Activated CD4-positive, alpha-beta memory T cell treated with anti-CD3 and anti-CD28 coated beads, Interleukin-2, amount 10 ng/mL, durations not matched to agents 7 days and 5 days (primary cell): ENCODE measurements at regions of chr11 and their contacts with region 1.

Region 1: DNA sequence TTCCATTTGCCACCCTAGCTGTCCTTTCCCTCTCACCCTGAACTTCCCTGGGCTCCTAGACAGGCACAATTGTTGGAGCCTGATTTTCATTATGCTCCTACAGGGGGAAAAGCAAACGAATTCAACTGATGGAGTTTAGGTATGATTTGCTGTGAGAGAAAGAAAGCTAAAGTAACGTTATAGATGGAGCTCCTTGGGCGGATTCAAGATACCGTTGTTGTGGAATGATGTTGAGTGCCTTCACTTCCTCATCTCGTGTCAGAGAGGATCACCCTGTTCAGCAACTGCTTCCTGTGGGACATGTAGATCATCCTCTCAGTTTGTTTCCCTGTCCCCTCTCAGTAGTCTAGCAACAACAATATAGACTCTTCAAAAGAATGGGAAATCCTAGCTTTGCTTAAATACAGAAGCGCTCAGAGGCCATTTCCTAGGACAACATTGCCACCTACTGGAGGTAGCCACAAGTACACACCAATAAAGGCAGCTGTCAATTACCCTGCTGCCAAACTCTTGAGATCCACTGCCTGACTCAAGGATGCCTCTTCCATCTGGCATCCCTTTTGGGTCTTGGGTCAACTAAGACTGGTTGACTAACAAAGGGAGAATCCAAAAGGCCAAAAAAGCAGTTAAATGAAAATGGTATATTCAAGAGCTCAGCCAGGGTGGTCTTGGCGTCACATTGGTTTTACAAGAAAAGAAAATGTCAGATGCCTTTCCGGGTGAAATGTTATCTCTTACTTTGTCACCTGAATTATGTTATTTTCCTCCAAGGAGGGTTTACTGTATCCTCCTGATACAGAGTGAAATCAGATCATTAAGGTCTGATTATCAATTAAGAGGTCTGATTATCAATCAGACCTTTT is 13.5 kb upstream of the DTX4 start:
- DNase-seq: peak; percentile 69
- H3K4me3 Mint-ChIP-seq: no peak overlapping the region
- H3K27ac Mint-ChIP-seq: no peak overlapping the region
- H3K4me1 Mint-ChIP-seq: peaks cover 10% of the 10 kb centered on the region
- H3K27me3 Mint-ChIP-seq: peaks cover 7% of the 10 kb centered on the region

Region 2: DNA sequence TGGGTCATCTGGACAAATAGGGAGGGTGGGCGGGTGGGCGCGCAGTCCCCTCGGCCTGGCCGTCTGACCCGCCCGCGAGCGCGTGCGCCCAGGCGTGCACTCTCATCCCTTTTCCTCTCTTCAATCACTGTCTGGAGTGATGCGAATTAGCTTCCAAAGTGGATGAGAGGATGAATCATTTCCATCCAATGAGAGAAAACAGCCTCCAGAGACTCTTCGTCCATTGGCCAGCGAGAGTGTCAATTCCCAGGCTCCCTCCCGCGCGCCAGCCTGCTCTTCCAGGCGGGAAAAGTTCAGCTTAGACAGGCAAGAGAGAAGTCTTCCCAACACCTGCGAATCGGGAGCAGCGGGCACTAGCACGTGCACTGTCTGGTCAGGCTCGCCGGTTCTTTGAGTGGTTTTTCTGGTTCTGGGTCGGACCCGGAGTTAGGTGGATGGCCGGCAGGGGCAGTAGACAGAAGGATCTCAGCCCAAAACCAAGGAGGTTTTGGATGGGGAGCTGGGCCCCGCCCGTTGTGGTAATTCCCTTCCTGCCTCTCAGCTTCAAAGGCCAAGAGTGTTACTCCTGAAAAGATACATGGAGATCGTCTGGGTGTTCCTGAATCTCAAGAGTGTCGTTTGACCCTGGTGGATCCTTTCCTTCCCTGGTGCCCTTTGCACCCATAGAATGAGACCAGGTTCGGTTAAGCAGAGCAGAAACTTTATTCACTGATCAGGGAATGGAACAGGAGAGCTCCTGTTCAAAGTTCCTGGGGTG is 252.5 kb before region 1 on chr11:
- CTCF ChIA-PET with region 1: no interaction called
- POLR2A ChIA-PET with region 1: no interaction called
- DNase-seq: no peak
- H3K4me3 Mint-ChIP-seq: no peak overlapping the region
- H3K27ac Mint-ChIP-seq: no peak overlapping the region
- H3K4me1 Mint-ChIP-seq: no peaks in the 10 kb centered on the region
- H3K27me3 Mint-ChIP-seq: peaks cover 49% of the 10 kb centered on the region

Region 3: GRCh38 chr11:59053387-59053786 is 105.0 kb before region 1 on chr11:
- CTCF ChIA-PET with region 1: interaction called, 27 read pairs
- POLR2A ChIA-PET with region 1: no interaction called
- DNase-seq: peak; percentile 81
- H3K4me3 Mint-ChIP-seq: no peak overlapping the region
- H3K27ac Mint-ChIP-seq: no peak overlapping the region
- H3K4me1 Mint-ChIP-seq: peaks cover 3% of the 10 kb centered on the region
- H3K27me3 Mint-ChIP-seq: peaks cover 30% of the 10 kb centered on the region

Region 4: GRCh38 chr11:59097113-59097708 is 61.2 kb before region 1 on chr11:
- CTCF ChIA-PET with region 1: interaction called, 14 read pairs
- POLR2A ChIA-PET with region 1: no interaction called
- DNase-seq: peak; percentile 73
- H3K4me3 Mint-ChIP-seq: no peak overlapping the region
- H3K27ac Mint-ChIP-seq: no peak overlapping the region
- H3K4me1 Mint-ChIP-seq: peaks cover 14% of the 10 kb centered on the region
- H3K27me3 Mint-ChIP-seq: peaks cover 23% of the 10 kb centered on the region

Region 5: GRCh38 chr11:59142530-59143507 is 15.6 kb before region 1 on chr11 and contains the start of gene FAM111A:
- CTCF ChIA-PET with region 1: interaction called, 78 read pairs
- POLR2A ChIA-PET with region 1: interaction called, 32 read pairs
- DNase-seq: peak; percentile 91
- H3K4me3 Mint-ChIP-seq: peak within 1 kb of the TSS; percentile 95
- H3K27ac Mint-ChIP-seq: peak within 1 kb of the TSS; percentile 93
- H3K4me1 Mint-ChIP-seq: peaks cover 58% of the 10 kb centered on the region
- H3K27me3 Mint-ChIP-seq: no peaks in the 10 kb centered on the region
- total RNA-seq, gene FAM111A: 136 to 141 TPM